Naive thymus-derived CD4-positive, alpha-beta T cell (primary cell): ENCODE measurements at regions of chr16 and their contacts with region 1.

Region 1: DNA sequence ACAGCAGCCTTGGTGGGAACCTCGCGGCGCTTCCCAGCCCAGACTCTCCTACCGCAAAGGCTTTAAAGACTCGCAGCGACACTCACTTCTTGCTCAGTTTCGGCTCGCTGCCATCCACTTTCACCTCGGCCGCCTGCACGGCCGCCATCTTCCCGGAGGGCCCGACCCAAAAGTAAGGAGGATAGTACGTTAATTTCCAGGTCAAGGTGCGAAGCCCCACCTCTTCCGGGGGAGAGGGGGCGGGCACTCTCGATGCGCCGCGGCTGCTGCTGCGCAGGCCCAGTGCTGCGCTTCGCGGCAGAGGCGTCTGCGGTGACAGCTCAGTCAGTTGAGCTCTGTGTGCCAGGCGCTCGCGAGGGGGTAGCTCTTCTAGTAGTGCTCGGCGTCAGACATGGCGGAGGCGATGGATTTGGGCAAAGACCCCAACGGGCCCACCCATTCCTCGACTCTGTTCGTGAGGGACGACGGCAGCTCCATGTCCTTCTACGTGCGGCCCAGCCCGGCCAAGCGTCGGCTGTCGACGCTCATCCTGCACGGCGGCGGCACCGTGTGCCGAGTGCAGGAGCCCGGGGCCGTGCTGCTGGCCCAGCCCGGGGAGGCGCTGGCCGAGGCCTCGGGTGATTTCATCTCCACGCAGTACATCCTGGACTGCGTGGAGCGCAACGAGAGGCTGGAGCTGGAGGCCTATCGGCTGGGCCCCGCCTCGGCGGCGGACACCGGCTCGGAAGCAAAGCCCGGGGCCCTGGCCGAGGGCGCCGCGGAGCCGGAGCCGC is at the starts of genes KARS1 and TERF2IP:
- DNase-seq: peak; percentile 86 to 96 (median 96)
- ATAC-seq: peak; percentile 93
- H3K4me3 ChIP-seq: peak within 1 kb of the TSS; percentile 97
- H3K4me3 Mint-ChIP-seq: peak within 1 kb of the TSS; percentile 90 to 100 (median 99)
- H3K27ac ChIP-seq: peak within 1 kb of the TSS; percentile 97
- H3K27ac Mint-ChIP-seq: peak within 1 kb of the TSS; percentile 96 to 100 (median 99)
- H3K4me1 ChIP-seq: peaks cover 36 to 48% of the 10 kb centered on the region in 2 donors
- H3K4me1 Mint-ChIP-seq: peaks cover 35 to 76% (median 67%) of the 10 kb centered on the region in 7 donors
- H3K27me3 ChIP-seq: no peaks in the 10 kb centered on the region
- H3K27me3 Mint-ChIP-seq: no peaks in the 10 kb centered on the region
- total RNA-seq, gene KARS1: 118 to 216 (median 123) TPM
- total RNA-seq, gene TERF2IP: 70.8 to 90.4 (median 88.7) TPM

Region 2: DNA sequence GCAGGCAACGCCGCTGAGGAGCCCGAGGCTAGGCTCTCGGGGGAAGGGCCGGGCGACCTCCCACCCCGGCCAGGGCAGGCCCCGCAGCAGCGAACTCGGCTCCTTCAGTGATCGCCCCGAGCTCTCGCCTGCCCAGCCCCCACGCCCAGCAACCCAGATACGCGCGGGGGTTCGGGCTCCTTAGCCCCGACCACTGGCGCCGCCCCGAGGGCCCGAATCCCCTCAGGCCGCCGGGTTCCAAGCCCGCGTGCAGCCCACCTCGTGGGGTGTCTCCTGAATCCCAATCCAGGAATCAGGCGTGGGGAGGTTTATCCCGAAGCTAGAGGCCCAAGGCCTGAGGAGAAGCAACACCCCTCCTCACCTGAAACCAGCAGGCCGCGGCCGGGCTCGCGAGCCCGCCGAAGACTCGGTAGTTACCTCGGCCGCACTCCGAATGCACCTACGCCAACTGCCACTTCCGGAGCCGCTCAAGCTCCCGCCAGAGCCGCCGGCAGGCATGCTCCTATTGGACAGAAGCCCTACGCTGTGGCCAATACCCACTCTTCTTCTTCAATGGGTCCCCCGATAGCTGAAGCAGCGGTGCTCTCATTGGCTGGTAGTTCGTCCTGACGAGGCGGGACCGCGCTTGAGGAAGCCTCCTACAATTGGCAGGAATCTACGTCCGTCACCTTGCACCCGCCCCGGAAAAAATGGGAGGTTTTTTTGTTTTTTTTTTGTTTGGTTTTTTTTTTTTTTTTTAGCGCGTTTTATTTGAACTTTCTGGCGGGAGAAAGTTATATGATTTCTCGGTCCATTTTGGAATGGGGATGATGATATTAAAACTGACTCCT is 981.0 kb before region 1 on chr16 and contains the start of gene RFWD3:
- CTCF ChIA-PET with region 1: no interaction called
- POLR2A ChIA-PET with region 1: interaction called, 3 read pairs
- intact Hi-C with region 1: loop called in 1 of 2 experiments (anchors 2 kb)
- DNase-seq: peak; percentile 80 to 99 (median 97)
- ATAC-seq: peak; percentile 100
- H3K4me3 ChIP-seq: peak within 1 kb of the TSS; percentile 89
- H3K4me3 Mint-ChIP-seq: peak within 1 kb of the TSS; percentile 87 to 98 (median 95)
- H3K27ac ChIP-seq: peak within 1 kb of the TSS; percentile 86
- H3K27ac Mint-ChIP-seq: peak within 1 kb of the TSS; percentile 92 to 97 (median 95)
- H3K4me1 ChIP-seq: peaks cover 0 to 10% of the 10 kb centered on the region in 2 donors
- H3K4me1 Mint-ChIP-seq: peaks cover 26 to 48% (median 44%) of the 10 kb centered on the region in 7 donors
- H3K27me3 ChIP-seq: no peaks in the 10 kb centered on the region
- H3K27me3 Mint-ChIP-seq: peaks cover 0 to 2% (median 0%) of the 10 kb centered on the region in 5 donors
- total RNA-seq, gene RFWD3: 39.3 to 88.0 (median 56.9) TPM

Region 3: GRCh38 chr16:75148311-75149195 is 499.1 kb before region 1 on chr16 and contains the start of gene ZFP1:
- CTCF ChIA-PET with region 1: no interaction called
- POLR2A ChIA-PET with region 1: no interaction called
- intact Hi-C with region 1: loop called in 1 of 2 experiments (anchors 5 kb)
- DNase-seq: peak; percentile 91 to 98 (median 95)
- ATAC-seq: peak; percentile 93
- H3K4me3 ChIP-seq: peak within 1 kb of the TSS; percentile 98
- H3K4me3 Mint-ChIP-seq: peak within 1 kb of the TSS; percentile 85 to 92 (median 89)
- H3K27ac ChIP-seq: peak within 1 kb of the TSS; percentile 89
- H3K27ac Mint-ChIP-seq: peak within 1 kb of the TSS; percentile 66 to 90 (median 86)
- H3K4me1 ChIP-seq: peaks cover 0 to 6% of the 10 kb centered on the region in 2 donors
- H3K4me1 Mint-ChIP-seq: peaks cover 13 to 31% (median 27%) of the 10 kb centered on the region in 7 donors
- H3K27me3 ChIP-seq: no peaks in the 10 kb centered on the region
- H3K27me3 Mint-ChIP-seq: no peaks in the 10 kb centered on the region
- total RNA-seq, gene ZFP1: 8.6 to 13.4 (median 10.1) TPM

Region 4: GRCh38 chr16:75519881-75520280 is 127.8 kb before region 1 on chr16:
- CTCF ChIA-PET with region 1: no interaction called
- POLR2A ChIA-PET with region 1: interaction called, 15 read pairs
- intact Hi-C with region 1: loop called (anchors 1 kb)
- DNase-seq: no peak
- ATAC-seq: no peak
- H3K4me3 ChIP-seq: no peak overlapping the region
- H3K4me3 Mint-ChIP-seq: no peak overlapping the region
- H3K27ac ChIP-seq: no peak overlapping the region
- H3K27ac Mint-ChIP-seq: no peak overlapping the region
- H3K4me1 ChIP-seq: peaks cover 0 to 3% of the 10 kb centered on the region in 2 donors
- H3K4me1 Mint-ChIP-seq: peaks cover 5 to 17% (median 13%) of the 10 kb centered on the region in 7 donors
- H3K27me3 ChIP-seq: no peaks in the 10 kb centered on the region
- H3K27me3 Mint-ChIP-seq: peaks cover 0 to 9% (median 0%) of the 10 kb centered on the region in 5 donors

Region 5: GRCh38 chr16:75622761-75623605 is 24.7 kb before region 1 on chr16 and contains the start of gene ADAT1:
- CTCF ChIA-PET with region 1: interaction called, 8 read pairs
- POLR2A ChIA-PET with region 1: interaction called, 118 read pairs
- intact Hi-C with region 1: loop called (anchors 1 kb)
- DNase-seq: peak; percentile 91 to 99 (median 97)
- ATAC-seq: peak; percentile 97
- H3K4me3 ChIP-seq: peak within 1 kb of the TSS; percentile 80
- H3K4me3 Mint-ChIP-seq: peak within 1 kb of the TSS; percentile 91 to 99 (median 96)
- H3K27ac ChIP-seq: peak within 1 kb of the TSS; percentile 93
- H3K27ac Mint-ChIP-seq: peak within 1 kb of the TSS; percentile 92 to 99 (median 97)
- H3K4me1 ChIP-seq: peaks cover 30 to 49% of the 10 kb centered on the region in 2 donors
- H3K4me1 Mint-ChIP-seq: peaks cover 29 to 76% (median 52%) of the 10 kb centered on the region in 7 donors
- H3K27me3 ChIP-seq: no peaks in the 10 kb centered on the region
- H3K27me3 Mint-ChIP-seq: no peaks in the 10 kb centered on the region
- total RNA-seq, gene ADAT1: 41.3 to 69.4 (median 63.6) TPM

Region 6: DNA sequence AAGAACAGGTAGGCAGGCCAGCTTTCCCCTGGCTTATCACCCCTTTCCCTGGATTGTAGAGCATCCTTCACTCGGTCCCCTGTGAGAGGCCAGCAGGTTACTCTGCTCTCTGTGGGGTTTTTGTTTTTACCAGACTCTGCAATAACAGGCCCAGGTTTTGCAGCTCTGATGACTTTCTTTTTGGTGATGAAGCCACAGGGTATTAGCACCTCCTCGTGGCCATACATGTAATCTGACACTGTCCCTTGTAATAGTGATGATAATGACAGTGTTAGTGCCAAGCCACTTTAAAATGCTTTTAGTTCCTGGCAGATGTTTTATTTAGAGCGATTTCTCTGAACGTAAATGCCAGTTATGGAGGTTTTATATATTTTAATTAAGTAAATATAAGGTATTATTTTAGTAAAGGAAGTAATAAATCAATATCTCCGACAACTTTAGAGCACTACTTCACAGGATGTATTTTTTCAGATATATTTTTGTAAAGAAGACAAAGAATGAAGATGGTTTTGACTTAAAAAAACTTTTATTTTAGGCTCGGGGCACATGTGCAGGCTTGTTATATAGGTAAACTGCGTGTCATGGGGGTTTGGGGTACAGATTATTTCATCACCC is 116.6 kb after region 1 on chr16:
- CTCF ChIA-PET with region 1: interaction called, 3 read pairs
- POLR2A ChIA-PET with region 1: interaction called, 6 read pairs
- intact Hi-C with region 1: loop called (anchors 1 kb)
- DNase-seq: peak in 8 of 9 donors; percentile 37 to 72 (median 63)
- ATAC-seq: peak; percentile 98
- H3K4me3 ChIP-seq: no peak overlapping the region
- H3K4me3 Mint-ChIP-seq: no peak overlapping the region
- H3K27ac ChIP-seq: no peak overlapping the region
- H3K27ac Mint-ChIP-seq: peak overlapping the region in 5 of 9 donors; percentile 8 to 55 (median 19)
- H3K4me1 ChIP-seq: no peaks in the 10 kb centered on the region
- H3K4me1 Mint-ChIP-seq: peaks cover 0 to 5% (median 0%) of the 10 kb centered on the region in 7 donors
- H3K27me3 ChIP-seq: no peaks in the 10 kb centered on the region
- H3K27me3 Mint-ChIP-seq: peaks cover 0 to 20% (median 13%) of the 10 kb centered on the region in 5 donors